ENCODE measurements at regions of chr9 and their contacts with region 1.

Region 1: GRCh38 chr9:75866273-75866871 is 24.1 kb upstream of the PCSK5 start:
- DNase-seq: peak; percentile 61
- H3K4me3 Mint-ChIP-seq: no peak overlapping the region
- H3K27ac Mint-ChIP-seq: no peak overlapping the region
- H3K4me1 Mint-ChIP-seq: no peaks in the 10 kb centered on the region
- H3K27me3 Mint-ChIP-seq: no peaks in the 10 kb centered on the region
- CTCF ChIP-seq: peak; percentile 52

Region 2: GRCh38 chr9:75265525-75265972 is 600.8 kb before region 1 on chr9:
- CTCF ChIA-PET with region 1: interaction called, 29 read pairs
- POLR2A ChIA-PET with region 1: no interaction called
- intact Hi-C with region 1: loop called (anchors 10 kb)
- DNase-seq: peak; percentile 66
- H3K4me3 Mint-ChIP-seq: no peak overlapping the region
- H3K27ac Mint-ChIP-seq: no peak overlapping the region
- H3K4me1 Mint-ChIP-seq: no peaks in the 10 kb centered on the region
- H3K27me3 Mint-ChIP-seq: no peaks in the 10 kb centered on the region
- CTCF ChIP-seq: peak; percentile 75

Region 3: GRCh38 chr9:75723560-75723959 is 142.8 kb before region 1 on chr9:
- CTCF ChIA-PET with region 1: no interaction called
- POLR2A ChIA-PET with region 1: no interaction called
- intact Hi-C with region 1: no loop called
- DNase-seq: no peak
- H3K4me3 Mint-ChIP-seq: no peak overlapping the region
- H3K27ac Mint-ChIP-seq: no peak overlapping the region
- H3K4me1 Mint-ChIP-seq: no peaks in the 10 kb centered on the region
- H3K27me3 Mint-ChIP-seq: no peaks in the 10 kb centered on the region
- CTCF ChIP-seq: no peak

Region 4: DNA sequence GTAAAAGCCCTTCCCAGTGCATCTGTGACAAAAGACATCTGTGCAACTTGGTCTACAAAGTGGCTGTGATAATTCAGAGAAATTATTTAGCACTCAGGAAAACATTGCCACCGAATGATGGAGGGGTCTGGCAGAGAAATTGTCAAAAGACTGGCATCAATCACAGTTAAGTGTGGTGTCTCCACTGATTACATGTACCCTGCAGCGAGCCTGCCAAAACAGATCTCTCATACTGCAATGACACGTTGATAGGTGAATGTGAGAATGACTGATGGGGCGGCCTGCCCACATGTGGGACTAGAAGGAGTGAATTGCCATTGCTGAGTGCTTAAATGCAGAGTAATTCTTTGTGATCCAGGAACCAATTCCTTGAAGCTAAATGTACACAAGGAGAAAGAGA is 112.3 kb before region 1 on chr9:
- CTCF ChIA-PET with region 1: no interaction called
- POLR2A ChIA-PET with region 1: no interaction called
- intact Hi-C with region 1: no loop called
- DNase-seq: no peak
- H3K4me3 Mint-ChIP-seq: no peak overlapping the region
- H3K27ac Mint-ChIP-seq: no peak overlapping the region
- H3K4me1 Mint-ChIP-seq: no peaks in the 10 kb centered on the region
- H3K27me3 Mint-ChIP-seq: no peaks in the 10 kb centered on the region
- CTCF ChIP-seq: no peak

Region 5: DNA sequence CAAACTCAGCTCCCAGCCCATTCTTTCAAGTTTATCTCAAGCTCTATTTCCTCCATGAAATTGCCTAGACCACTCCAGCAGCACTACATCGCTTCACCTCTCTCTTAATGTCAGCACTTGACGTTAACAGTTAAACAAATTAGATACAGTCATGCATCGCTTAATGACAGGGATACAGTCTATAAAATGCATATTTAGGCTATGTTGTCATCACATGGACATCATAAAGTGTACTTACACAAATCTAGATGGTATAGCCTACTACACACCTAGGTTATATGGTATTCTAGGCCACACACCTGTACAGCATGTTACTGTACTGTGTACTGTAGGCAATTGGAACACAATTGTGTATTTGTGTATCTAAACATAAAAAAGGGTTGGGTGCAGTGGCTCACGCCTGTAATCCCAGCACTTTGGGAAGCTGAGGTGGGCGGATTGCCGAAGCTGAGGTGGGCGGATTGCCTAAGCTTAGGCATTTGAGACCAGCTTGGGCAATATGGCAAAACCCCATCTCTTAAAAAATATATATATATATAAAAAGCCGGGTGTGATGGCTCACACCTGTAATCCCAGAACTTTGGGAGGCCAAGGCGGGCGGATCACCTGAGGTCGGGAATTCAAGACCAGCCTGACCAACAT is 10.7 kb after region 1 on chr9:
- CTCF ChIA-PET with region 1: interaction called, 18 read pairs
- POLR2A ChIA-PET with region 1: no interaction called
- intact Hi-C with region 1: no loop called
- DNase-seq: no peak
- H3K4me3 Mint-ChIP-seq: no peak overlapping the region
- H3K27ac Mint-ChIP-seq: no peak overlapping the region
- H3K4me1 Mint-ChIP-seq: no peaks in the 10 kb centered on the region
- H3K27me3 Mint-ChIP-seq: no peaks in the 10 kb centered on the region
- CTCF ChIP-seq: no peak

Measured in MCF 10A (cell line).